ENCODE measurements at regions of chr17 and their contacts with region 1.

Region 1: GRCh38 chr17:45197555-45198334 is 23.9 kb upstream of the FMNL1 start:
- DNase-seq: no peak
- H3K4me3 ChIP-seq: no peak overlapping the region
- H3K27me3 ChIP-seq: no peaks in the 10 kb centered on the region
- CTCF ChIP-seq: peak; percentile 100

Region 2: GRCh38 chr17:45031231-45032173 is 166.2 kb before region 1 on chr17:
- CTCF ChIA-PET with region 1: no interaction called
- POLR2A ChIA-PET with region 1: no interaction called
- DNase-seq: no peak
- H3K4me3 ChIP-seq: no peak overlapping the region
- H3K27me3 ChIP-seq: no peaks in the 10 kb centered on the region
- CTCF ChIP-seq: no peak

Region 3: GRCh38 chr17:45148183-45149036 is 49.3 kb before region 1 on chr17 and contains the start of gene HEXIM1:
- CTCF ChIA-PET with region 1: interaction called, 210 read pairs
- POLR2A ChIA-PET with region 1: interaction called, 21 read pairs
- DNase-seq: peak; percentile 96
- H3K4me3 ChIP-seq: peak within 1 kb of the TSS; percentile 91
- H3K27me3 ChIP-seq: no peaks in the 10 kb centered on the region
- CTCF ChIP-seq: no peak
- polyA plus RNA-seq, gene HEXIM1: 16.0 and 16.7 TPM in 2 replicates

Region 4: DNA sequence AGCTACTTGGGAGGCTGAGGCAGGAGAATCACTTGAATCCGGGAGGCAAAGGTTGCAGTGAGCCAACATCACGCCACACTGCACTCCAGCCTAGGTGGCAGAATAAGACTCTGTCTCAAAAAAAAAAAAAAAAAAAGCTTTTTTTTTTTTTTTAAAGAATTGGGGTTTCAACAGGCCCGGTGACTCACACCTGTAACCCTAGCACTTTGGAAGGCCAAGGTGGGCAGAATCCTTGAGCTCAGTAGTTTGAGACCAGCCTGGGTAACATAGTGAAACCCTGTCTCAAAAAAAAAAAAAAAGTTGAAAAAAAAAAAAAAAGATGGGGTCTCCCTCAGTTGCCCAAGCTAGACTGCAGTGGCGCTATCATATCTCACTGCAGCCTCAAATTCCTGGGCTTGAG is 42.7 kb before region 1 on chr17:
- CTCF ChIA-PET with region 1: interaction called, 210 read pairs
- POLR2A ChIA-PET with region 1: interaction called, 6 read pairs
- DNase-seq: no peak
- H3K4me3 ChIP-seq: no peak overlapping the region
- H3K27me3 ChIP-seq: no peaks in the 10 kb centered on the region
- CTCF ChIP-seq: no peak

Region 5: GRCh38 chr17:45161019-45161825 is 36.5 kb before region 1 on chr17:
- CTCF ChIA-PET with region 1: interaction called, 21 read pairs
- POLR2A ChIA-PET with region 1: interaction called, 6 read pairs
- DNase-seq: peak; percentile 99
- H3K4me3 ChIP-seq: peak overlapping the region; percentile 81
- H3K27me3 ChIP-seq: no peaks in the 10 kb centered on the region
- CTCF ChIP-seq: no peak

Region 6: GRCh38 chr17:45172454-45173286 is 25.1 kb before region 1 on chr17:
- CTCF ChIA-PET with region 1: interaction called, 22 read pairs
- POLR2A ChIA-PET with region 1: no interaction called
- DNase-seq: peak; percentile 26
- H3K4me3 ChIP-seq: peak overlapping the region; percentile 24
- H3K27me3 ChIP-seq: no peaks in the 10 kb centered on the region
- CTCF ChIP-seq: peak; percentile 11; the same call in 1 of the 2 replicates

Region 7: GRCh38 chr17:45184144-45184543 is 13.6 kb before region 1 on chr17:
- CTCF ChIA-PET with region 1: interaction called, 16 read pairs
- POLR2A ChIA-PET with region 1: no interaction called
- DNase-seq: no peak
- H3K4me3 ChIP-seq: no peak overlapping the region
- H3K27me3 ChIP-seq: no peaks in the 10 kb centered on the region; the same call in 1 of the 2 replicates
- CTCF ChIP-seq: no peak

Region 8: DNA sequence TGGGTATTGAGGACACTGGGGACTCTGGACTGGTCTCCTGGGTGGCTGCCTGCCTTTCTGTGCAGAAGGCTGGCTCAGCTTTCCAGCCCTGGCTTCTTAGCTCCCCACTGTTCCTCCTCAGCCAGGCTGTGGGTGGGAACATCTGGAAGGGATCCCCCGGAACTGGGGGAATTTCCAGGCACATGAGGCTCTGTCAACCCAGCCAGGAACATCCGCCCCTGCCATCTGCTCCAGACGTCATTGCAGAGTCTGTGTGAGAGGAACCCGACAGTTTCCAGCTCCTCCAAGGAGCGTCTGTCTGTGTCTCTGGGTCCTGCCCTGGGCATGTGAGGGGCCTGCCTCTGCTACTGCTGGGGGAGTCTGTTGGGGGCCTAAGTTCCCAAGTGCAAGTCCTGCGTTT is 550.2 kb after region 1 on chr17:
- CTCF ChIA-PET with region 1: no interaction called
- POLR2A ChIA-PET with region 1: no interaction called
- DNase-seq: no peak
- H3K4me3 ChIP-seq: no peak overlapping the region
- H3K27me3 ChIP-seq: peaks cover 11% of the 10 kb centered on the region; the same call in 1 of the 2 replicates
- CTCF ChIP-seq: no peak

Measured in BJ (cell line).